PC-9 (cell line): ENCODE measurements at regions of chr9 and their contacts with region 1.

Region 1: DNA sequence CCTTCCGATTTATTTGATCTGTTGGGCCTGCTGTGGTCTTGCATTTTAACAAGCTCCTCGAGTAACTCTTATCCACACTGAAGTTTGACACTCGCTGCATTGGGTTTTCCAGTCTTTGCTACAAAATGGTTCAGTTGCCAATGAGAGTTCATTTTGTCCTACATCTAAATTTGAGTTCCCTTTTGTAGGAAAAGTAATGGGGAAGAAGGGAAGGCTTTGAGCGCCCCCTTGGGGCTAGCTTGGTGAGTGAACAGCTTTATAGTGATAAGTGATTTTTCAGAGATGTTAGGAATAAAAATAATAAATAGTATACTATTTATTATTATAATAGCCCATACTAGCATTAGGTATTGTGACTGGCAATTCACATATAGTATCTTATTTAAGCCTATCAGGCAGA is 89.9 kb upstream of the GNAQ start:
- DNase-seq: peak; percentile 26 to 70
- H3K4me3 ChIP-seq: no peak overlapping the region
- H3K27ac ChIP-seq: no peak overlapping the region
- H3K4me1 ChIP-seq: peaks cover 21% of the 10 kb centered on the region
- H3K27me3 ChIP-seq: no peaks in the 10 kb centered on the region
- CTCF ChIP-seq: peak; percentile 76

Region 2: DNA sequence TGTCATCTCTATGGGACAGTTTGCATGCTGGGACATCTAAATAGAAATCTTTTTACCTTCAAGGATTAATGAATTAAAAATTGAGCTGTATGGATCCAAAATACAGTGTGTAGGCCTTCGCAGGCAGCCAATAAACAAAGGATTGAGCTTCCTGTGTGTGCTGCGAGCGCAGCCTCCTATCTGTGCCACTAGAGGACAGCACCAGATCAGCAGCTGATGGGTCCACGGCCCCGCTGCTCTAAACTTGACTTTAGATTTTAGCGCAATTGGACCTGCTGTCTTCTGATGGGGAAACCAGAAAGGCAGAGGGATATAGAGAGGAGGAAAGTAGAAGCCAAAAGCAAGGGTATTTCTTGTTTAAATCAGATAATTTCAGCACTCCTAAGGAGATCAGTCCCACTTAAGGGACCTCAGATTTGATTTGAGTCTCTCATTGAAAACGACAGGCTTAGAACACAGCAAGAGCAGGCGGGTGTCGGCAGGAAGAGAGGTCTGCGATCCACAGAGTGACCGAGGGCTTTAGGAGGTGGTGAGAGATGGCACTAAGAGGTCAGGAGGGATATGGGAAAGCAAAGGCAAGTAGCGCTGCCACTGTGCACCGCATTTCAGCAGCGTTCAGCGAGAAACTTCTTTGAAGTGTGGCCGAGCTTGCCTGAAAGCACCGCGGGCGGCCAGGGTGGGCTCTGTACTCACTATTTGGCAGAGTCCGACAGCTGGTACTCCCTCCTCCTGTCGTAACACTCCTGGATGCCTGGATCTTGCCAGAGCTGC is 687.6 kb before region 1 on chr9:
- CTCF ChIA-PET with region 1: interaction called, 4 read pairs
- POLR2A ChIA-PET with region 1: no interaction called
- intact Hi-C with region 1: loop called (anchors 1 kb)
- DNase-seq: peak in 1 of 2 experiments; percentile 51
- H3K4me3 ChIP-seq: no peak overlapping the region
- H3K27ac ChIP-seq: no peak overlapping the region
- H3K4me1 ChIP-seq: no peaks in the 10 kb centered on the region
- H3K27me3 ChIP-seq: no peaks in the 10 kb centered on the region
- CTCF ChIP-seq: peak; percentile 92

Region 3: DNA sequence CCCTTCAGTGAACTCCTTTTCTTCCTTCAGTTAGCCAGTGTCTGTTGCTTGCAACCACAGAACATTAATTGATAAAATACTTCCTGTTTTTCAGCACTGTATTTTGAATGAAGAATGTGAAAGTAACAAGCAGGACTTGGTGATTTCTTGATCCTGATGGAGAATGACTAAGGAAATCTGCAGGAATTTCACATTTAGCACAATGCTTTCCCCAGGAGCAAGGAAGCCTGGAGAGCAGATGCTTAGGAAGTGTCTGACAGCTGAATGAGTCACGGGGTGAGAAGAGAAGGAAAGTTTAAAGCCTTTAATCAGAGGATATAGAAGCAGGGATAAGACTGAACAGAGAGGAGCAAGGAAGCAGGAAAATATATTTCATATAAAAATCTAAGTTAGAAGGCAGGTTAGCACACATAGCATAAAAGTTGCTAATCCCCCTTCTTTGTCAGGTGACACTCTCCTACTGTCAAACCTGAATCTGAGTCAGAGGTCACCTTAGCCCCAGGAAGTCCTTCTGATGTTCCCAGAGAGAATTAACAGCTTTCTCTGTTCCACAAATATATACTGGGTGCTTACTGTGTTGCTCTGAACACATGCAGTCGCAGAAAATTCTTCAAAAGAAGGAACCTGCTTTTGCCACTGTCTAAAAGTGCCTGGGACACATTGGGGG is 533.1 kb before region 1 on chr9:
- CTCF ChIA-PET with region 1: no interaction called
- POLR2A ChIA-PET with region 1: interaction called, 7 read pairs
- intact Hi-C with region 1: loop called (anchors 2 kb)
- DNase-seq: peak; percentile 31 to 89
- H3K4me3 ChIP-seq: peak overlapping the region; percentile 45; the same call in 1 of the 2 replicates
- H3K27ac ChIP-seq: peak overlapping the region; percentile 96
- H3K4me1 ChIP-seq: peaks cover 50% of the 10 kb centered on the region
- H3K27me3 ChIP-seq: no peaks in the 10 kb centered on the region
- CTCF ChIP-seq: no peak

Region 4: GRCh38 chr9:77864211-77864889 is 257.1 kb before region 1 on chr9:
- CTCF ChIA-PET with region 1: no interaction called
- POLR2A ChIA-PET with region 1: no interaction called
- intact Hi-C with region 1: loop called (anchors 10 kb)
- DNase-seq: no peak
- H3K4me3 ChIP-seq: no peak overlapping the region
- H3K27ac ChIP-seq: no peak overlapping the region
- H3K4me1 ChIP-seq: no peaks in the 10 kb centered on the region
- H3K27me3 ChIP-seq: no peaks in the 10 kb centered on the region
- CTCF ChIP-seq: no peak

Region 5: GRCh38 chr9:78040726-78041125 is 80.8 kb before region 1 on chr9:
- CTCF ChIA-PET with region 1: no interaction called
- POLR2A ChIA-PET with region 1: no interaction called
- intact Hi-C with region 1: loop called (anchors 1 kb)
- DNase-seq: peak; percentile 49 to 91
- H3K4me3 ChIP-seq: no peak overlapping the region
- H3K27ac ChIP-seq: peak overlapping the region; percentile 26
- H3K4me1 ChIP-seq: peaks cover 35% of the 10 kb centered on the region
- H3K27me3 ChIP-seq: no peaks in the 10 kb centered on the region
- CTCF ChIP-seq: no peak

Region 6: GRCh38 chr9:78103971-78104433 is 17.5 kb before region 1 on chr9:
- CTCF ChIA-PET with region 1: no interaction called
- POLR2A ChIA-PET with region 1: no interaction called
- intact Hi-C with region 1: no loop called
- DNase-seq: peak in 1 of 2 experiments; percentile 13
- H3K4me3 ChIP-seq: no peak overlapping the region
- H3K27ac ChIP-seq: no peak overlapping the region
- H3K4me1 ChIP-seq: no peaks in the 10 kb centered on the region
- H3K27me3 ChIP-seq: no peaks in the 10 kb centered on the region
- CTCF ChIP-seq: no peak

Region 7: DNA sequence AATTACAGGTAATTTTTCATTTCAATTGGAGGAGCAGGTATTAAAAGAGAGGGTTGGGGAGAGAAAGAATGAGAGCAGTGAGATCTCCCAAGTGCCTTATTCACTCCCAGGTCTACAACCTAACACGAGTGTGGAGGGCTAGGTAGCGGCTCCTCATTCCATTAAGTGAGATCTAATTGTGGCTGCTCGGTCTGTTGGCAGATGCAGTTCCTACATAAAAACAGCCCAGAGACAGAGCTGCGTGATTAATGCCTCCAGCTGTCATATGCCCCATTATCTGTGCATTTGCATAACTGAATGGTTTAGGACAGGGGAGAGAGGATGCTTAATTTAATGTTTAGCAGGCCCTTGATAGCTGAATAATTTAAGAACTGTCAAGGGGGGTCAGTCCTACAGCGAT is 276.0 kb after region 1 on chr9:
- CTCF ChIA-PET with region 1: no interaction called
- POLR2A ChIA-PET with region 1: no interaction called
- intact Hi-C with region 1: no loop called
- DNase-seq: no peak
- H3K4me3 ChIP-seq: no peak overlapping the region
- H3K27ac ChIP-seq: no peak overlapping the region
- H3K4me1 ChIP-seq: no peaks in the 10 kb centered on the region
- H3K27me3 ChIP-seq: peaks cover 29% of the 10 kb centered on the region
- CTCF ChIP-seq: no peak